Activated CD4-positive, alpha-beta memory T cell treated with anti-CD3 and anti-CD28 coated beads, Interleukin-2, amount 10 ng/mL, durations not matched to agents 7 days and 5 days (primary cell): ENCODE measurements at regions of chr15 and their contacts with region 1.

Region 1: DNA sequence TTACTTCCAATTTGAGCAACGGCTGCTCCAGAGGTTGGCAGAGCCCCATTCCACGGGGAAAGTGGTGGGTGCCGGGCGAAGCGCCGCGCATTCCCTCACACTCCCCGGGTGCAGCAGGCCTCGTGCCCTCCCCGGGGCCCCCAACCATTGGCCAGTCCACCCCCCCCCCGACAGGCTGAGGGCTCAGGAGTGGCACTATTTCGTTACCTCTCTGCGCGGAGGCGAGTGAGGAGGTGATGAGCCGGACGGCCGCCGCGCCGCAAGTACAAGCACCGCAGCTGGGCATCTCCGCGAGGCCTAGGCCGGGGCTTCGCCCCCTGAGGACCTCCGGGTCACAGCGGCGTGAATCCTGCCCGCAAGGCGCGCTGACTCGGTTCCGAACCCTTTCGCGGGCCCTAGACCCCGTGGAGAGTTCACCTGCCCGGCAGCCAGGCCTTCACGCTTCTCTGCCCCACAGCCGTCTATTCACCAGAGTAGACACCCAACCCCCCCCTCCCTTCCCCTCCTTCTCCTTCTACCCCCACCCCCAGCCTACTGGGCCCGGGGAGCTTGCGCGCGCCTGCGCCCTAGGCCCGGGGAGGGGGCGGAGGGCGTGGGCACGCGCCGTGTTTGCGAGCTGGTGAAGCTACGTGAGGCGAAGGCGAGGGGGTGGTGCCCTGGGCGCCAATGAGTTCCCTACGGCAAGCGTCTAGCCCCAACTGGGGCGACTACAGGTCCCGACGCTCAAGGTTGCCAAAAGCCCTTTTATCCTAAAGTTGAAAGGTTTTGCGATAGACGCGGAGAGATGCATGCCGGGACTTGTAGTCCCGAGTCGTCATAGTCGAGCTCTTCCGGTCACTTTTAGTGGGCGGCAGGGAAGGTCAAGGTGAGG is at the start of gene CLPX:
- DNase-seq: peak; percentile 91
- H3K4me3 Mint-ChIP-seq: peak within 1 kb of the TSS; percentile 90
- H3K27ac Mint-ChIP-seq: peak within 1 kb of the TSS; percentile 83
- H3K4me1 Mint-ChIP-seq: peaks cover 21% of the 10 kb centered on the region
- H3K27me3 Mint-ChIP-seq: peaks cover 2% of the 10 kb centered on the region
- total RNA-seq, gene CLPX: 48.5 to 57.8 TPM

Region 2: DNA sequence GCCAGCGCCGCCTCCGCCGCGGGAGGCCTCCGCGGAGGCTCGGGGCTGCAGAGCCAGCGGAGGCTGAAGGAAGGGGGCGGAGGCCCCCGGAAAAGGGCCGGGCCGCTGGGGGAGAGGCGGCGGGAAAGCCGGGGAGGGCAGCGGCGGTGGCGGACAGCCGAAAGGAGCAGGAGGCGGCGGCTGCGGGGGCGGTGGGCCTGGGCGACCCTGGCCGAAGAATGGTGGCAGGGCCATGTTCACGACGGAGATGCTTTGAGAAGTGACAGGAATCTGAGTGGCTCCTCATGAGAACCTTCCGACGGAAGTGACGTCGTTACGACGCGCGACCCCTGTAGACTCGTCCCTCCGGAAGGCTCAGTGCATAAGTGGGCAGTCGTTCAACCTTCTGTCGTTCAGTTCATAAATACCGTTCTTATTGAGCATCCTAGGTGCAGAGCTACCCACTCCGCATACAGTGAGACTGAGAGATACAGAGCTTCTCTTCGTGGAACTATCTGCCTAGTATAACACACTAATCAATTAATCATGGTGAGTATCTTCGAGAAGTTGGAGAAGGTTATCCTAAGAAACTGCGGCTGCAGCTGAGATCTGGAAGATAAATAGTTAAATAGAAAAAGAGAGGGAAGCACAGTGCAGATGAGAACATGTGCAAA is 51.4 kb before region 1 on chr15 and contains the start of gene PDCD7:
- CTCF ChIA-PET with region 1: no interaction called
- POLR2A ChIA-PET with region 1: interaction called, 11 read pairs
- DNase-seq: peak; percentile 87
- H3K4me3 Mint-ChIP-seq: peak within 1 kb of the TSS; percentile 88
- H3K27ac Mint-ChIP-seq: peak within 1 kb of the TSS; percentile 86
- H3K4me1 Mint-ChIP-seq: peaks cover 30% of the 10 kb centered on the region
- H3K27me3 Mint-ChIP-seq: no peaks in the 10 kb centered on the region
- total RNA-seq, gene PDCD7: 37.8 to 38.9 TPM

Region 3: DNA sequence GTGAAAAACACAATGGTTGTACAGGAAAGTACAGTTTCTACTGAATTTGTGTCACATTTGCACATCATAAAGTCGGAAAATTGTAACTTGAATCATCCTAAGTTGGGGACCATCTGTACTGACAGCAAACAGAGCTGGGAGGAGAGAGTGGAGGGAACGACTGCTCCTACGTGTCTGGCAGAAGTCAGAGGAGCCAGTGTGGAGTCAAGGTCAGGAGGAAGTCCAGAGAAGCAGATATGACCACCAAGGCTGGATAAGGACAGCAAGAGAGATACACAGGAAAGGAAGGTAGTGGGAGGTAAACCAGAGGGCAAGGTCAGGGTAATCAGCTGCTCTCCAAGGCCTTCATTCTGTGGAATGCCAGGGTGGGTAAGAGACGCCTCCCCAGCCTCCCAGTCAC is 28.9 kb after region 1 on chr15:
- CTCF ChIA-PET with region 1: no interaction called
- POLR2A ChIA-PET with region 1: no interaction called
- DNase-seq: no peak
- H3K4me3 Mint-ChIP-seq: no peak overlapping the region
- H3K27ac Mint-ChIP-seq: no peak overlapping the region
- H3K4me1 Mint-ChIP-seq: no peaks in the 10 kb centered on the region
- H3K27me3 Mint-ChIP-seq: no peaks in the 10 kb centered on the region

Region 4: GRCh38 chr15:65298731-65299130 is 113.6 kb after region 1 on chr15:
- CTCF ChIA-PET with region 1: interaction called, 26 read pairs
- POLR2A ChIA-PET with region 1: interaction called, 60 read pairs
- DNase-seq: no peak
- H3K4me3 Mint-ChIP-seq: peak overlapping the region; percentile 80
- H3K27ac Mint-ChIP-seq: peak overlapping the region; percentile 85
- H3K4me1 Mint-ChIP-seq: peaks cover 41% of the 10 kb centered on the region
- H3K27me3 Mint-ChIP-seq: no peaks in the 10 kb centered on the region